ENCODE measurements at regions of chr6 and their contacts with region 1.

Region 1: DNA sequence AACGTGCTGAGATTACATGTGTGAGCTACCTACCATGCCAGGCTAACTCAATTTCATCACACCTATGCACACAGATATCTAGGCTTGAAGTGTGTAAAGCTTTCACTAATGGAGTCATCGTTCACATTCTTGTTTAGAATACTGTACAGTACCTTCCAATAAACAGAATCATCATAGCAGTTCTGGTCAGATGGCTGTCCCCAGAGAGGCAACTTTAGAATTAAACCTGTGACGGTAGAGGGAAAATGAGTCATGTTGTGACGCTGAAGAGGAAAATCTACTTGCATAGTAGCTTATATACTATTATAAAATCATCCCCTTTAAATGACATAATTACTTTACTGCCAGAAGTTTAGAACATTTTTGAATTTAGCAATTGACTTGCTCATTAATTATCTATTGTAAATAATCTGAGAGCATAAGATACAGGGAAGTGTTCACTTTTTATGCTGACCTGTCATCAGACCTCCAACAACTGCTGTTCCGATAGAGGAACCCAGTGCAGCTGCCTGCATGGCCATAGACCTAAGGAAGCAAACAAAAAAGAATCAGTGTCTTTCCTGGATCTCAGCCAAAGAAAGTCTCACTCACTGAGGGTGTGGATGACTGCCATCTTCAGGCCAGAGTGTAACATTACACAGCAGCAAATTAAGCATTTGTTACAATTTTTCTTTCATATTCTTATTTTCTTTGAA is 29.8 kb downstream of the RHAG start:
- DNase-seq: peak; percentile 2
- H3K4me3 Mint-ChIP-seq: no peak overlapping the region
- H3K27ac Mint-ChIP-seq: no peak overlapping the region
- H3K4me1 Mint-ChIP-seq: no peaks in the 10 kb centered on the region
- H3K27me3 Mint-ChIP-seq: no peaks in the 10 kb centered on the region

Region 2: GRCh38 chr6:49462927-49463611 is 143.8 kb before region 1 on chr6 and contains the starts of genes CENPQ and MMUT:
- intact Hi-C with region 1: loop called (anchors 10 kb)
- DNase-seq: peak; percentile 91
- H3K4me3 Mint-ChIP-seq: peak within 1 kb of the TSS; percentile 99
- H3K27ac Mint-ChIP-seq: peak within 1 kb of the TSS; percentile 97
- H3K4me1 Mint-ChIP-seq: peaks cover 57% of the 10 kb centered on the region
- H3K27me3 Mint-ChIP-seq: peaks cover 2% of the 10 kb centered on the region
- total RNA-seq, gene CENPQ: 18.2 and 18.7 TPM in 2 replicates
- total RNA-seq, gene MMUT: 13.0 and 13.4 TPM in 2 replicates

Region 3: GRCh38 chr6:49531774-49532569 is 74.9 kb before region 1 on chr6:
- intact Hi-C with region 1: loop called (anchors 1 kb)
- DNase-seq: no peak
- H3K4me3 Mint-ChIP-seq: no peak overlapping the region
- H3K27ac Mint-ChIP-seq: no peak overlapping the region
- H3K4me1 Mint-ChIP-seq: no peaks in the 10 kb centered on the region
- H3K27me3 Mint-ChIP-seq: peaks cover 15% of the 10 kb centered on the region

Region 4: GRCh38 chr6:49550492-49551077 is 56.3 kb before region 1 on chr6 and contains the start of gene C6orf141:
- intact Hi-C with region 1: loop called (anchors 1 kb)
- DNase-seq: no peak
- H3K4me3 Mint-ChIP-seq: peak within 1 kb of the TSS; percentile 83
- H3K27ac Mint-ChIP-seq: peak within 1 kb of the TSS; percentile 19
- H3K4me1 Mint-ChIP-seq: peaks cover 20% of the 10 kb centered on the region
- H3K27me3 Mint-ChIP-seq: peaks cover 40% of the 10 kb centered on the region
- total RNA-seq, gene C6orf141: not detected in 2 replicates

Region 5: DNA sequence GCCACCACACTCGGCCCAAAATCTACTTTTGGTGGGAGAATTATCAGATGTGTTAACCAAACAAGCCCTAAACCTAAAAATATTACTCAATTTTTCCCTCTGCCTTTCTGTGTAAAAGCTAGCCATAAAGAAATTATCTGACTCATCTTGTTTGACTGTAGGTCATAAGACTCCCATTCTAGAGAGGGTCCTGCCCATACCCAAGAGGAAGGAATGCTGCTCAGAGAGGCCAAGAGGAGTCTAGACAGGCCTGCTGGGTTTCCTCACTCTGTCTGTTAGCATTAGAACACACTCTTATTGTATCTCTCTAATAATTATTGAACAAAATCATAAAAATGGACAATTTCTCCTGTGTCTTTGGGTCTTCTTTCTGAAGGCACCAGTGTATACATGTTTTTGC is 30.2 kb before region 1 on chr6:
- intact Hi-C with region 1: no loop called
- DNase-seq: no peak
- H3K4me3 Mint-ChIP-seq: no peak overlapping the region
- H3K27ac Mint-ChIP-seq: no peak overlapping the region
- H3K4me1 Mint-ChIP-seq: no peaks in the 10 kb centered on the region
- H3K27me3 Mint-ChIP-seq: peaks cover 7% of the 10 kb centered on the region

Region 6: GRCh38 chr6:49849213-49849907 is 242.5 kb after region 1 on chr6:
- intact Hi-C with region 1: loop called (anchors 5 kb)
- DNase-seq: no peak
- H3K4me3 Mint-ChIP-seq: no peak overlapping the region
- H3K27ac Mint-ChIP-seq: no peak overlapping the region
- H3K4me1 Mint-ChIP-seq: no peaks in the 10 kb centered on the region
- H3K27me3 Mint-ChIP-seq: no peaks in the 10 kb centered on the region